Activated naive CD4-positive, alpha-beta T cell treated with anti-CD3 and anti-CD28 coated beads for 36 hours (primary cell): ENCODE measurements at regions of chr6 and their contacts with region 1.

Region 1: GRCh38 chr6:75208298-75209183 is 2.7 kb upstream of the COL12A1 start:
- DNase-seq: peak; percentile 91
- H3K4me3 Mint-ChIP-seq: peak overlapping the region; percentile 48
- H3K27ac Mint-ChIP-seq: no peak overlapping the region
- H3K4me1 Mint-ChIP-seq: peaks cover 51% of the 10 kb centered on the region
- H3K27me3 Mint-ChIP-seq: peaks cover 68% of the 10 kb centered on the region

Region 2: DNA sequence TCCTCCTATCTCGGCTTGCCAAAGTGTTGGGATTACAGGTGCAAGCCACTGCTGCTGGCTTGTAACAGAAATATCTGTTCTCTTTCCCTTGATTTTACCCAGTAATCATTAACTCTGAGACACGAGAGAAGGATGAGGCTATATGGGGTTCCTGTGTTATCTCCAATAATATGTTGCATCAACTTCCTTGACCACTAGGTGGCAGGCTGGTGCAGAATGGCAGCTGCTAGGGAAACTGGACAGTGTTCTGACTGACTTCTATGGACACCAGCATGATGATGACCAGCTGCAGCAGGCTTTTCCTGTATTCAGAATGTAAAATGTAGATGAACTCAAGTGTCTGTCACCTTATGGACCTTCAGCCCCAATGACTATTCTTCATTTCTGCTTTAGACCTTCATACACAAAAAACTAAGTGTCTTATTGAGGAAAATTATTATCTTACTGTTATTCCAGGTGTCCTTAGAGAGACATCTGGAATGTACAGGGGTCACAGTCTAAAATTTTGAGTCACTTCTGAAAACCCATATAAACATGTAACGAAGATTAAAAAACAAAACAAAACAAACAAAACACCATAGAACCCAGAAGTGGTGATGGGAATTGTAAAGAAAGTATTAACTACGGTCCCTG is 1533.0 kb before region 1 on chr6:
- CTCF ChIA-PET with region 1: interaction called, 10 read pairs
- intact Hi-C with region 1: loop called (anchors 5 kb)
- DNase-seq: peak; percentile 87
- H3K4me3 Mint-ChIP-seq: no peak overlapping the region
- H3K27ac Mint-ChIP-seq: no peak overlapping the region
- H3K4me1 Mint-ChIP-seq: no peaks in the 10 kb centered on the region
- H3K27me3 Mint-ChIP-seq: peaks cover 8% of the 10 kb centered on the region

Region 3: DNA sequence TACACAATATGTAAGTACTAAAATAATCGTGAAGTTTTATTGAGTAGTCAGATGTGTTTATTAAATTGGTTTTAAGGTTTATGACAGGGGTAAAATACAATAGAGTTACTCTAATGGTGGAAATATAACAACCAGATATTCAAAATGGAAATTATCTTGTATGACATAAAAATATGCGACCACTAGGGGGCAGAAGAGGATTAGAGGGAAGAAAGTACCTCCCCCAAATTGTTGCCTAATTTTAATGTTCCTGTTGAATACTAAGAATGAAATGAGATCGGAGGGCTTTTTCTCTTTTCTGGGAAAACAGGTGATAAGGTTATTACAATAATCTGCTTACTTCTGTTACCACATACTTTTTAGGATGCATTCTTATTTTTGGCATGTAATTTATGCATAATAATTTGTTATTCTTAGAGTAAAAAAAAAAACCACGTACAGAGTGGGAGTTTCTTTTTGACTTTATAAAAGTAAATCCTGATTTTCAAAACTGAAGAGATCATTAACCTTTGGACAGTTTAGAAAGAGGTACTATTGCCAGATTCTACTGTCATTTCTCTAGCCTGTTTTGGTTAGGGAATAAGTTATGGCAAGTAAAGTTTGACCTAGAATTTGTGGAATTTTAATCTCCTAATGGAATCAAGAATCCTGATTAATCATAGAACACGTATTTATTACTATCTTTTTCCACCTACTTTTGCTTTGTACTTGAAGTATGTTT is 1353.4 kb before region 1 on chr6:
- CTCF ChIA-PET with region 1: interaction called, 37 read pairs
- intact Hi-C with region 1: loop called (anchors 1 kb)
- DNase-seq: peak; percentile 6
- H3K4me3 Mint-ChIP-seq: no peak overlapping the region
- H3K27ac Mint-ChIP-seq: no peak overlapping the region
- H3K4me1 Mint-ChIP-seq: no peaks in the 10 kb centered on the region
- H3K27me3 Mint-ChIP-seq: no peaks in the 10 kb centered on the region

Region 4: GRCh38 chr6:74091136-74091793 is 1117.3 kb before region 1 on chr6:
- CTCF ChIA-PET with region 1: interaction called, 64 read pairs
- intact Hi-C with region 1: loop called (anchors 1 kb)
- DNase-seq: no peak
- H3K4me3 Mint-ChIP-seq: no peak overlapping the region
- H3K27ac Mint-ChIP-seq: no peak overlapping the region
- H3K4me1 Mint-ChIP-seq: no peaks in the 10 kb centered on the region
- H3K27me3 Mint-ChIP-seq: peaks cover 2% of the 10 kb centered on the region

Region 5: GRCh38 chr6:74749211-74750142 is 459.1 kb before region 1 on chr6:
- CTCF ChIA-PET with region 1: no interaction called
- intact Hi-C with region 1: loop called (anchors 5 kb)
- DNase-seq: no peak
- H3K4me3 Mint-ChIP-seq: no peak overlapping the region
- H3K27ac Mint-ChIP-seq: no peak overlapping the region
- H3K4me1 Mint-ChIP-seq: no peaks in the 10 kb centered on the region
- H3K27me3 Mint-ChIP-seq: no peaks in the 10 kb centered on the region

Region 6: DNA sequence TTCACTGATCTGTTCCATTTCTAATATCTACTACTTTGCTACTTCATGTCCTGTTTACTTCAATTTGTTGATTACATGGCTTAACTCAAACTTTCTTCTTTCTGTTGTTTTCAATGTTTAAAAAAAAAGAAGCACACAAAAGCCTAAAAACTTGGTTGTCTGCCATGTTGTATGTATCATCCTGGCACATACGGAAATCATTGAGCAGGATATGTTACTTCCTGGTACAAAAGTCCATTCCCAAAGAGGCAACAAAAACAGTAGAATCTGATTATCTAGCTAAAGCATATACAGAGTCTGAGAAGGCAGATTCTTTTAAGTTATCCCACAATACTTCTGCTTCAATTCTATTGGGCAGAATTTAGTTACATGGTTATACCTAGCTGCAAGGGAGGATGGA is 11.8 kb after region 1 on chr6:
- CTCF ChIA-PET with region 1: interaction called, 26 read pairs
- intact Hi-C with region 1: no loop called
- DNase-seq: no peak
- H3K4me3 Mint-ChIP-seq: no peak overlapping the region
- H3K27ac Mint-ChIP-seq: no peak overlapping the region
- H3K4me1 Mint-ChIP-seq: no peaks in the 10 kb centered on the region
- H3K27me3 Mint-ChIP-seq: peaks cover 14% of the 10 kb centered on the region

Region 7: GRCh38 chr6:75581231-75581630 is 372.7 kb after region 1 on chr6:
- CTCF ChIA-PET with region 1: no interaction called
- intact Hi-C with region 1: no loop called
- DNase-seq: no peak
- H3K4me3 Mint-ChIP-seq: no peak overlapping the region
- H3K27ac Mint-ChIP-seq: no peak overlapping the region
- H3K4me1 Mint-ChIP-seq: peaks cover 12% of the 10 kb centered on the region
- H3K27me3 Mint-ChIP-seq: no peaks in the 10 kb centered on the region